CD8-positive, alpha-beta T cell (primary cell): ENCODE measurements at regions of chr7 and their contacts with region 1.

Region 1: DNA sequence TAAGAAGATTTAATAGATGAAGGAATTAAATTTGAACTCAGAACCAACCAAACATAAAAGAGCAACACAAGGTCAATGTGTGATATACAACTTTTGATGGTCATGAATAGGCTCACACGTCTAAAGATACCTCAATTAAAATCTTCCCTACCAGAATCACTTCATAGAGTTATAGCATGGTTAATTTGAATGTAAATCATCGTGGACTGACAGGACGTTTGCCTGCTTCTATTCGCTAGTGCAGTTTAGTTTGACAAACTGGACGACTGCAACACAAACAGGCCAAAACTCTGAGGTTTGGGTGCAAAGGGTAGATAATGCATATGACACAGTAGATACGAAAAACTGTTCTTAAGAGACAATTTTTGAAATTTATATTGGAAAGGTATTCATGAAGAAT is 32.5 kb upstream of the CNTNAP2 start:
- DNase-seq: no peak
- ATAC-seq: no peak
- H3K4me3 ChIP-seq: no peak overlapping the region
- H3K4me3 Mint-ChIP-seq: no peak overlapping the region
- H3K27ac ChIP-seq: no peak overlapping the region
- H3K27ac Mint-ChIP-seq: no peak overlapping the region
- H3K4me1 ChIP-seq: no peaks in the 10 kb centered on the region
- H3K4me1 Mint-ChIP-seq: no peaks in the 10 kb centered on the region
- H3K27me3 ChIP-seq: no peaks in the 10 kb centered on the region
- H3K27me3 Mint-ChIP-seq: no peaks in the 10 kb centered on the region
- CTCF ChIP-seq: no peak

Region 2: GRCh38 chr7:145036604-145037405 is 1047.3 kb before region 1 on chr7:
- CTCF ChIA-PET with region 1: no interaction called
- POLR2A ChIA-PET with region 1: no interaction called
- intact Hi-C with region 1: loop called in 1 of 2 experiments (anchors 10 kb)
- DNase-seq: peak in 6 of 9 experiments; percentile 6 to 62 (median 28)
- ATAC-seq: peak; percentile 65
- H3K4me3 ChIP-seq: no peak overlapping the region
- H3K4me3 Mint-ChIP-seq: peak overlapping the region; percentile 20
- H3K27ac ChIP-seq: no peak overlapping the region
- H3K27ac Mint-ChIP-seq: no peak overlapping the region
- H3K4me1 ChIP-seq: peaks cover 3% of the 10 kb centered on the region
- H3K4me1 Mint-ChIP-seq: peaks cover 2% of the 10 kb centered on the region
- H3K27me3 ChIP-seq: no peaks in the 10 kb centered on the region
- H3K27me3 Mint-ChIP-seq: peaks cover 12% of the 10 kb centered on the region
- CTCF ChIP-seq: peak; percentile 90

Region 3: DNA sequence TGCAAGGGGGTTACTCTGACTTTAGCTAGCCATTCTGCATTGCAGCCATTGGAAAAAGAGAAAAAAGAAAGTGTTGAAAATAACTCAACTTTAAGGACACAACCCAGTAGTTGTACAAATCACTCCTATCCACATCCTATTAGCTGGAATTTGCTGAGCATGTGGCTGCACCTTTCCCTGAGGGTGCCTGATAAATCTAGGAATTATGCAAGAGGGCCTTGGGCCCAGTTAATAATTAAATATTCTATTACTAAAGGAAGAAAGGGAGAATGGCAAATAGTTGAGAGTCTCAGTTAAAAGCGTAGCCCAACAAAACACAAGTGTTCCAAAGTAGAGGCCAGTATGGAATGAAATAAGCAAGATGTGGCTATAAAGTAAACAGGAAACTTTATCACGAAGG is 168.4 kb before region 1 on chr7:
- CTCF ChIA-PET with region 1: no interaction called
- POLR2A ChIA-PET with region 1: no interaction called
- intact Hi-C with region 1: no loop called
- DNase-seq: no peak
- ATAC-seq: no peak
- H3K4me3 ChIP-seq: no peak overlapping the region
- H3K4me3 Mint-ChIP-seq: no peak overlapping the region
- H3K27ac ChIP-seq: no peak overlapping the region
- H3K27ac Mint-ChIP-seq: no peak overlapping the region
- H3K4me1 ChIP-seq: no peaks in the 10 kb centered on the region
- H3K4me1 Mint-ChIP-seq: no peaks in the 10 kb centered on the region
- H3K27me3 ChIP-seq: no peaks in the 10 kb centered on the region
- H3K27me3 Mint-ChIP-seq: no peaks in the 10 kb centered on the region
- CTCF ChIP-seq: no peak

Region 4: DNA sequence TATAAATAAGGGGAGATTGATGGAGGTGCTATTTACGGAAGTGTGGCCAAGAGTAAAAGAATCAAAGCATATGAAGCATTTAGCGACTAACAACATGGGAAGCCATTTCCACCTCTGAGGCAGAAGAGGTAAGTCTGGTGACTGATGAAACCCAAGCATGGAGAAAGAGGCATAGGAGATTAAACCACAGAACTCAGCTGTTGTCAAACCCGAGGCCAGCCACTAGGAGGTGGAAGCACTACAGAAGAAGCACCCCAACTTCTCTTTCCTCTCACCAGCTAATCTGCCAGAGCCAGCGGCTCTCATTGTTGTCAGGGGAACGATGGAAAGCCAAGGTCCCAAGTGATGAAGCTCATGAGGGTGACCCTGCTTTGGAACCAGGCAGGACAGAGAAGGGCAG is 12.9 kb after region 1 on chr7:
- CTCF ChIA-PET with region 1: no interaction called
- POLR2A ChIA-PET with region 1: no interaction called
- intact Hi-C with region 1: no loop called
- DNase-seq: no peak
- ATAC-seq: no peak
- H3K4me3 ChIP-seq: no peak overlapping the region
- H3K4me3 Mint-ChIP-seq: no peak overlapping the region
- H3K27ac ChIP-seq: no peak overlapping the region
- H3K27ac Mint-ChIP-seq: no peak overlapping the region
- H3K4me1 ChIP-seq: no peaks in the 10 kb centered on the region
- H3K4me1 Mint-ChIP-seq: no peaks in the 10 kb centered on the region
- H3K27me3 ChIP-seq: no peaks in the 10 kb centered on the region
- H3K27me3 Mint-ChIP-seq: no peaks in the 10 kb centered on the region
- CTCF ChIP-seq: no peak

Region 5: DNA sequence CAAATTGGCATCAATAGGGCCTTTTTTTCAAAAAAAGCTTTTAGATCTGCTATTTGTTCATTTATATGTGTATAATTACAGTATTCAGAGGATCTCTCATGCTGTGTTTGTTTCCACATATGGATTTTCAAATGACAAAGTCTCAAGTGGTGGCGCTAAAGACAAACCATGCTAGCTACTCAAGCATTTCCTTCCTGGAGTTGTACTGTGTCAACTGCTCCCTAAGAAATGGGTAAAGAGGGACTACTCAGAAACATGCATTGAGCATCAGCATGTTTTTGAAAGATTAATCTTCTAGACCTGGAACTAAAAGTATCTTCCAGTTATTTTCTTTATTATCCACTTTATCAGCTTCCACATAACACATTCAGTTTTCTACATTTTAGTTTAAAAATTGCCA is 45.2 kb after region 1 on chr7:
- CTCF ChIA-PET with region 1: no interaction called
- POLR2A ChIA-PET with region 1: no interaction called
- intact Hi-C with region 1: no loop called
- DNase-seq: no peak
- ATAC-seq: no peak
- H3K4me3 ChIP-seq: no peak overlapping the region
- H3K4me3 Mint-ChIP-seq: no peak overlapping the region
- H3K27ac ChIP-seq: no peak overlapping the region
- H3K27ac Mint-ChIP-seq: no peak overlapping the region
- H3K4me1 ChIP-seq: no peaks in the 10 kb centered on the region
- H3K4me1 Mint-ChIP-seq: no peaks in the 10 kb centered on the region
- H3K27me3 ChIP-seq: no peaks in the 10 kb centered on the region
- H3K27me3 Mint-ChIP-seq: no peaks in the 10 kb centered on the region
- CTCF ChIP-seq: no peak